ENCODE measurements at regions of chr5 and their contacts with region 1.

Region 1: GRCh38 chr5:118257066-118257465 is 731.3 kb downstream of the DTWD2 start:
- DNase-seq: no peak
- ATAC-seq: no peak
- H3K4me3 Mint-ChIP-seq: no peak overlapping the region
- H3K27ac Mint-ChIP-seq: no peak overlapping the region
- H3K4me1 Mint-ChIP-seq: no peaks in the 10 kb centered on the region
- H3K27me3 Mint-ChIP-seq: no peaks in the 10 kb centered on the region
- CTCF ChIP-seq: no peak

Region 2: GRCh38 chr5:118775799-118776499 is 518.9 kb after region 1 on chr5:
- CTCF ChIA-PET with region 1: no interaction called
- POLR2A ChIA-PET with region 1: interaction called, 10 read pairs
- DNase-seq: no peak
- ATAC-seq: no peak
- H3K4me3 Mint-ChIP-seq: no peak overlapping the region
- H3K27ac Mint-ChIP-seq: no peak overlapping the region
- H3K4me1 Mint-ChIP-seq: peaks cover 14% of the 10 kb centered on the region
- H3K27me3 Mint-ChIP-seq: no peaks in the 10 kb centered on the region
- CTCF ChIP-seq: no peak

Measured in WTC11 (cell line).